Activated B cell treated with CpG ODN at 0.5 μM for 24 hours (primary cell): ENCODE measurements at regions of chr3 and their contacts with region 1.

Region 1: GRCh38 chr3:178966299-178967176 is 105.1 kb downstream of the ZMAT3 start:
- DNase-seq: no peak
- ATAC-seq: no peak
- H3K4me3 Mint-ChIP-seq: peak overlapping the region; percentile 76
- H3K27ac Mint-ChIP-seq: peak overlapping the region; percentile 81
- H3K4me1 Mint-ChIP-seq: peaks cover 46% of the 10 kb centered on the region
- H3K27me3 Mint-ChIP-seq: no peaks in the 10 kb centered on the region
- CTCF ChIP-seq: no peak

Region 2: DNA sequence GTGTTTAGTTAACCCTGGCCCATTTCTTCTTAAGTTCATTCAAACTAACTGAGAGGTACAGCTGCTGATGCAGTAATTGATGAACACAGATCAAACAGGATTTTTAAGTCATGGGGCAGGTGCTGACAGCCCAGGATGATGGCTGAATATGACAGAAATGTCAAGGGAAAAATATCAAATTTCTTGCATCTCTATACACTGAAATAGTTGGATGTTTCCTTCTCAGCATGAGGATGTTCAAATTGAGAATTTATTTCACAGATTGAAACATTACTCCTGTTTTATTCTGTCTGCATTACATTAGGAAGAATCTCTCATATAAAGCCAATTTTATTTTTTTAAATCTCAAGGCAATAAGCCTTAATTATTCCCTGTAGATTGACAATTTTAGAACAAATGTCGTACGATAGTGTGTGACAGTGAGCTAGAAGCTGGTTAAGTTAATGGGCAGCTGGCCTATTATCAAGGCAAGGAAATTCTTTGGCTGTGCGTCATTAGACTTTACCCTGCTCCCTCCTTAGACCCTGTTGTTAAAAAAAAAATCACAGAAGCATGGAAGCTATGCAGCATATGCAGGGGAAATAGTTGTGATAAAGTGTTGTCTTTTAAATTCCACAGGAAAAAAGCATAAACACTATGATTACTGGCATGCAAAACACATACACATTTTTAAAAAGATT is 614.1 kb before region 1 on chr3:
- CTCF ChIA-PET with region 1: no interaction called
- POLR2A ChIA-PET with region 1: no interaction called
- intact Hi-C with region 1: no loop called
- DNase-seq: no peak
- ATAC-seq: no peak
- H3K4me3 Mint-ChIP-seq: no peak overlapping the region
- H3K27ac Mint-ChIP-seq: no peak overlapping the region
- H3K4me1 Mint-ChIP-seq: no peaks in the 10 kb centered on the region
- H3K27me3 Mint-ChIP-seq: no peaks in the 10 kb centered on the region
- CTCF ChIP-seq: no peak

Region 3: DNA sequence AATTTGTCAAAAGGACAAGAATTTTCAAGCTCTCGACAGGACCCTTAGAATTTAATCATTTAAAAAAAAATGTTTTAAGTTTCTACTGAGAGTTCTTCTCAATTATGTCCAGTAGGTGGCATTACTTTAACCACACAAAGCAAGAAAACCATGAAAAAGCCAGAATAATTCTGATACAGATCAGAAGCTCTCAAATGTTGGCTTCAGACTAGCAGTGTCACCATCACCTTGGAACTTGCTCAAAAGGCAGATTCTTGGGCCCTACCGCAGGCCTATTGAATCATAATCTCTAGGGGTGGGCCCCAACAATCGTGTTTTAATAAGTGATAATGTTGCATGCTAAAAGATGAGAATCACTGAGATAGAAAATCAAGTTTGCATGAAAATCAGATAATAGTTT is 529.8 kb before region 1 on chr3:
- CTCF ChIA-PET with region 1: interaction called, 11 read pairs
- POLR2A ChIA-PET with region 1: no interaction called
- intact Hi-C with region 1: loop called (anchors 1 kb)
- DNase-seq: no peak
- ATAC-seq: no peak
- H3K4me3 Mint-ChIP-seq: no peak overlapping the region
- H3K27ac Mint-ChIP-seq: no peak overlapping the region
- H3K4me1 Mint-ChIP-seq: no peaks in the 10 kb centered on the region
- H3K27me3 Mint-ChIP-seq: no peaks in the 10 kb centered on the region
- CTCF ChIP-seq: peak; percentile 28

Region 4: DNA sequence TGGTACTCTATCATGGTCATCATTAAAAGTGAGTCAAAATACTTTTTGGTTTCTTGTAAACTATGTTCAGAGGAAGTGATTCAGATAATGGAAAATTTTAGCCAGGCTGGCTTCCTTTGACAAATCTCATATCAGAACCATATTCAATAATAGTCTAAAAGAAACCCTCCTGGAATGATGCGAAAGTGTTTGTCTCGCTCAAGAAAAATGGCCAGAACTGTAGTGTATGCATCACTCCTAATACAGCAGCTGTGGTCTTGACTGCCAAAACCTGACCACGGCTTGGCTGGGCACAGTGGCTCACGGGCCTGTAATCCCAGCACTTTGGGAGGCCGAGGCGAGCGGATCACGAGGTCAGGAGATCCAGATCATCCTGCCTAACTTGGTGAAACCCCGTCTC is 465.9 kb before region 1 on chr3:
- CTCF ChIA-PET with region 1: no interaction called
- POLR2A ChIA-PET with region 1: no interaction called
- intact Hi-C with region 1: no loop called
- DNase-seq: no peak
- ATAC-seq: no peak
- H3K4me3 Mint-ChIP-seq: no peak overlapping the region
- H3K27ac Mint-ChIP-seq: no peak overlapping the region
- H3K4me1 Mint-ChIP-seq: no peaks in the 10 kb centered on the region
- H3K27me3 Mint-ChIP-seq: no peaks in the 10 kb centered on the region
- CTCF ChIP-seq: no peak

Region 5: DNA sequence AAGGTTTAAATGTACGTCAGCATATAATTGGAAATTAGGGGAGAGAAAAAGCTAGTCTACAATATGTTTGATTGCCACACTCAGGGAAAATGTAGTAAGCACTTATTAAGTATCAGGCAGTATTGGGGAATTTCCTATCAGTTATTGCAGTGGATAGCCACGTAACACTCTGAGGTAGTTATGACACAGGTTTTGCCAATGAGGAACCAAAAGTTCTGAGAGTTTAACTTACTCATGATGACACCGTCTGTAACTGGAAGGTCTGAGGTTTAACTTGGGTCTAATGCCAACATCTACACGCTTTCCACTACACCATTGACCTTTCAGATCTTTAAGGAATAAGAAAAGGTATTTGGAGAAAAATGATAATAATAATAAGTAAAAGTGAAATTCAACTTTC is 15.6 kb after region 1 on chr3:
- CTCF ChIA-PET with region 1: no interaction called
- POLR2A ChIA-PET with region 1: no interaction called
- intact Hi-C with region 1: loop called (anchors 2 kb)
- DNase-seq: no peak
- ATAC-seq: peak; percentile 92
- H3K4me3 Mint-ChIP-seq: no peak overlapping the region
- H3K27ac Mint-ChIP-seq: peak overlapping the region; percentile 41
- H3K4me1 Mint-ChIP-seq: peaks cover 7% of the 10 kb centered on the region
- H3K27me3 Mint-ChIP-seq: no peaks in the 10 kb centered on the region
- CTCF ChIP-seq: no peak